HepG2 (cell line): ENCODE measurements at regions of chr1 and their contacts with region 1.

Region 1: GRCh38 chr1:19220991-19221390 is 10.9 kb upstream of the UBR4 start:
- DNase-seq: no peak
- ATAC-seq: no peak
- H3K4me3 ChIP-seq: no peak overlapping the region
- H3K27ac ChIP-seq: no peak overlapping the region
- H3K4me1 ChIP-seq: peaks cover 27% of the 10 kb centered on the region
- H3K27me3 ChIP-seq: no peaks in the 10 kb centered on the region
- CTCF ChIP-seq: no peak
- EP300 ChIP-seq: no peak
- POLR2A ChIP-seq: no peak
- RAD21 ChIP-seq: no peak

Region 2: GRCh38 chr1:19169642-19170041 is 51.3 kb before region 1 on chr1:
- CTCF ChIA-PET with region 1: no interaction called
- POLR2A ChIA-PET with region 1: no interaction called
- in situ Hi-C with region 1: no loop called
- intact Hi-C with region 1: no loop called
- DNase-seq: no peak
- ATAC-seq: no peak
- H3K4me3 ChIP-seq: no peak overlapping the region
- H3K27ac ChIP-seq: no peak overlapping the region
- H3K4me1 ChIP-seq: no peaks in the 10 kb centered on the region
- H3K27me3 ChIP-seq: no peaks in the 10 kb centered on the region
- CTCF ChIP-seq: no peak
- EP300 ChIP-seq: no peak
- POLR2A ChIP-seq: no peak
- RAD21 ChIP-seq: no peak

Region 3: GRCh38 chr1:19209990-19210771 is 10.8 kb before region 1 on chr1 and contains the start of gene UBR4:
- CTCF ChIA-PET with region 1: no interaction called
- POLR2A ChIA-PET with region 1: interaction called, 11 read pairs
- in situ Hi-C with region 1: no loop called
- intact Hi-C with region 1: no loop called
- DNase-seq: peak; percentile 94
- ATAC-seq: peak; percentile 95
- H3K4me3 ChIP-seq: peak within 1 kb of the TSS; percentile 84 to 87 (median 84)
- H3K27ac ChIP-seq: peak within 1 kb of the TSS; percentile 92
- H3K4me1 ChIP-seq: peaks cover 73% of the 10 kb centered on the region
- H3K27me3 ChIP-seq: peaks cover 0 to 4% of the 10 kb centered on the region in 2 experiments; a peak in 1 of 5 replicates
- CTCF ChIP-seq: no peak
- EP300 ChIP-seq: peak; percentile 34 to 65; a peak in 2 of 4 replicates
- POLR2A ChIP-seq: peak; percentile 86 to 93
- RAD21 ChIP-seq: peak; percentile 56
- total RNA-seq, gene UBR4: 59.1 and 66.2 TPM in 2 replicates

Region 4: DNA sequence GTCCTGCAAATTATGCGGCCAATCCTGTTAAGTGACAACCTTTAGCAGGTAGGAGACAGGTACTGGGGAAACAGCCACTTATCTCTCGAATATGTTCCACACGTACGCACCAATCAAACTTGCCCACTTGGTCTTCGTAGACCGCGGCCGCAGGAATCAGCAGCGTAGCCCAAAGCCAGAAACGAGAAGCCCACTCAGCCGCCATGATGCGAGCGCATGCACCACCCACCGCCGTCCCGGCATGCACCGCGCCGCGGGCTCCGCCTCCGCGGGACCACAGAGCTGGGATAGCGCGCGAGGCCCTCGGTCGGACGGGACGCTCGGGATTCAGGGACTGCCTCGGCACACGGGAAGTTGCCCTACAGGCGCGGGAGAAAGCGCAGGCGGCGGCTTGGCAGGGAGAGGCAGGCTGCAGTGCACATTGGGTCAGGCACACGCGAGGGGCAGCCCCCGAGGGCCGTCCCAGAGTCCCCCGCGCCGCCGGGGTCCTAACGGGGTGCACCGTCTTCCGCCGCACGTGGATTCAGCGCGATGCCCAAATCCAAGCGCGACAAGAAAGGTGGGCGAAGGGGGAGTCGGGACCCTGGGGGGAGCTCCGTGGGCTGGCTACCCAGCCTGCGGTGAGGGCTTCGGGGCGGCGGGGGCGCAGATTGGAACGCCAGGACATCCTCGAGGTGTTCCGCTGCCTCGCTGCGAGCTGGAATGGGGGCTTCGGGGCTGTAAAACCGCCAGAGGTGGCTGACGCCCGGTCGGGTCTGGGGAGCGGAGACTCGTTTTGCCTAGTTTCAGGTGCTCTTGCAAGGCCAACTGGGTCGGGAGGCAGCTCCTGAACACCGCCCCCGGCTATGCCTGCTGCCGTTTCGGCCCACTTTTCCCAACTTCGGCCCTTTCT is 30.6 kb after region 1 on chr1 and contains the starts of genes EMC1 and MRTO4:
- CTCF ChIA-PET with region 1: no interaction called
- POLR2A ChIA-PET with region 1: interaction called, 10 read pairs
- in situ Hi-C with region 1: no loop called
- intact Hi-C with region 1: no loop called
- DNase-seq: peak; percentile 70
- ATAC-seq: peak; percentile 93
- H3K4me3 ChIP-seq: peak within 1 kb of the TSS; percentile 61 to 97 (median 91)
- H3K27ac ChIP-seq: peak within 1 kb of the TSS; percentile 98
- H3K4me1 ChIP-seq: peaks cover 38% of the 10 kb centered on the region
- H3K27me3 ChIP-seq: no peaks in the 10 kb centered on the region; a peak in 1 of 5 replicates
- CTCF ChIP-seq: peak; percentile 16; the same call in 1 of the 2 replicates
- EP300 ChIP-seq: no peak
- POLR2A ChIP-seq: peak; percentile 91
- RAD21 ChIP-seq: peak; percentile 43
- total RNA-seq, gene EMC1: 22.1 and 61.3 TPM in 2 replicates
- total RNA-seq, gene MRTO4: 59.2 and 63.3 TPM in 2 replicates

Region 5: DNA sequence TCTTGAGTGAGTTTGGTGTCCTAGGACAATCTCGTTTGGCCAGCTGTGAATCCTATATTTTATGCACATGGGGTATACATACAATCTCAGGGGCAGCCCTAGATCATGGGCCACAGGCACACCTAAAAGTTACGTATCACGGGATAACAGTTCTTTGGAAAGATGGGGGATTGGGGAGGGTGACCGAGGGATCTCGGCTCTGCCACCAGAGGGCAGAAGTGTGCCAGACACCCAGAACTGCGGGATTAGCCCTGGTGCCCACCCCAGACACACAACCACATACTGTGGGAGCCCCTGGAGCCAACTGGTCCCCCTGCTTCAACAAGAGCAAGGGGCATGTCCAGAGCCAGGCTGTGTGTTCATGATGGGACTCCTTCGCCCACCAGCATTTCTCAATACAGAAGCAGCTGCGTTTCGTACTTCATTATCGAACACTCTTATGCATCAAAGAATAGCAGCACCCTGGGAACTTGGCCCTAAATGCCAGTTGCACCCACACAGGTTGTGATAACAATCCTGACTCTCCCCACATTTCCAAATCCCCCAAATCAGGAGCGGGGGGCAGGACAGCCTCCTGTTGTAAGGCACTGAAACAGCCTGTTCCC is 541.3 kb after region 1 on chr1:
- CTCF ChIA-PET with region 1: no interaction called
- POLR2A ChIA-PET with region 1: no interaction called
- in situ Hi-C with region 1: no loop called
- intact Hi-C with region 1: no loop called
- DNase-seq: peak; percentile 6
- ATAC-seq: peak; percentile 81
- H3K4me3 ChIP-seq: no peak overlapping the region
- H3K27ac ChIP-seq: no peak overlapping the region
- H3K4me1 ChIP-seq: peaks cover 11% of the 10 kb centered on the region
- H3K27me3 ChIP-seq: no peaks in the 10 kb centered on the region; a peak in 1 of 5 replicates
- CTCF ChIP-seq: peak; percentile 80
- EP300 ChIP-seq: no peak
- POLR2A ChIP-seq: no peak
- RAD21 ChIP-seq: peak; percentile 61; the same call in 1 of the 2 replicates